Mammary epithelial cell (primary cell): ENCODE measurements at regions of chr1 and their contacts with region 1.

Region 1: GRCh38 chr1:183281553-183282091 is 95.6 kb downstream of the LAMC2 start:
- DNase-seq: peak; percentile 85
- H3K4me3 ChIP-seq: no peak overlapping the region
- H3K27ac ChIP-seq: peak overlapping the region; percentile 58
- H3K4me1 ChIP-seq: peaks cover 67% of the 10 kb centered on the region
- H3K27me3 ChIP-seq: no peaks in the 10 kb centered on the region
- CTCF ChIP-seq: peak; percentile 77 to 95

Region 2: GRCh38 chr1:183195142-183195574 is 86.5 kb before region 1 on chr1:
- CTCF ChIA-PET with region 1: no interaction called
- dilution Hi-C with region 1: no loop called
- in situ Hi-C with region 1: no loop called
- intact Hi-C with region 1: loop called (anchors 5 kb)
- DNase-seq: peak; percentile 80
- H3K4me3 ChIP-seq: no peak overlapping the region
- H3K27ac ChIP-seq: peak overlapping the region; percentile 68
- H3K4me1 ChIP-seq: peaks cover 65% of the 10 kb centered on the region
- H3K27me3 ChIP-seq: no peaks in the 10 kb centered on the region
- CTCF ChIP-seq: no peak

Region 3: GRCh38 chr1:183267646-183268431 is 13.8 kb before region 1 on chr1:
- CTCF ChIA-PET with region 1: interaction called, 5 read pairs
- dilution Hi-C with region 1: no loop called
- in situ Hi-C with region 1: no loop called
- intact Hi-C with region 1: loop called (anchors 1 kb)
- DNase-seq: peak; percentile 98
- H3K4me3 ChIP-seq: no peak overlapping the region
- H3K27ac ChIP-seq: peak overlapping the region; percentile 69
- H3K4me1 ChIP-seq: peaks cover 57% of the 10 kb centered on the region
- H3K27me3 ChIP-seq: no peaks in the 10 kb centered on the region
- CTCF ChIP-seq: no peak

Region 4: GRCh38 chr1:183471743-183472487 is 190.3 kb after region 1 on chr1:
- CTCF ChIA-PET with region 1: no interaction called
- dilution Hi-C with region 1: no loop called
- in situ Hi-C with region 1: no loop called
- intact Hi-C with region 1: loop called (anchors 1 kb)
- DNase-seq: peak; percentile 96
- H3K4me3 ChIP-seq: peak overlapping the region; percentile 88 to 99 (median 99)
- H3K27ac ChIP-seq: peak overlapping the region; percentile 96
- H3K4me1 ChIP-seq: peaks cover 25% of the 10 kb centered on the region
- H3K27me3 ChIP-seq: no peaks in the 10 kb centered on the region
- CTCF ChIP-seq: no peak

Region 5: GRCh38 chr1:183622884-183623785 is 341.5 kb after region 1 on chr1:
- CTCF ChIA-PET with region 1: no interaction called
- dilution Hi-C with region 1: no loop called
- in situ Hi-C with region 1: loop called in 1 of 2 experiments (anchors 5 kb)
- intact Hi-C with region 1: loop called (anchors 1 kb)
- DNase-seq: peak; percentile 62
- H3K4me3 ChIP-seq: no peak overlapping the region
- H3K27ac ChIP-seq: no peak overlapping the region
- H3K4me1 ChIP-seq: peaks cover 26% of the 10 kb centered on the region
- H3K27me3 ChIP-seq: no peaks in the 10 kb centered on the region
- CTCF ChIP-seq: peak; percentile 81 to 84